Right cardiac atrium (tissue), 5 donors: ENCODE measurements at regions of chrX and their contacts with region 1.

Region 1: GRCh38 chrX:9471571-9471985 is 6.7 kb downstream of the TBL1X start:
- DNase-seq: no peak
- ATAC-seq: no peak
- H3K4me3 ChIP-seq: no peak overlapping the region
- H3K27ac ChIP-seq: no peak overlapping the region
- H3K4me1 ChIP-seq: no peaks in the 10 kb centered on the region
- H3K27me3 ChIP-seq: no peaks in the 10 kb centered on the region

Region 2: DNA sequence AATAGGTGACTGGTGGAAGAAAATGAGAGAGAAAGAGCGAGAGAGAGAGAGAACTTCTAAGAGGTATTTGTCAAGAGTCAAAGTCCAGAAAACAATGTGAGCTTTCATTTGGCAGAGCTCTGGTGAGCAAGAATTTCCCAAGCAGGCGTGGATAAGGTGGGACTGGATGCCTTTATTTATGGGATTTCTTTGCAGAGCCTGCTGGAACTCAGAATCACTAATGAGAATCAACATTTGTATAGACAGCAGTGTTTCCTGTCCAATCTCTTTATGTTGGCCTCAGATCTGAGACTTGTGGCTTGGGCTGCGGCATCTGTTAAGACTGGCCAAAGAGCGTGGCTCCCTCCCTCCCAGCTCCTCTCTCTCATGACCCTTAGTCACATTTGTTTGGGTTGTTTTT is 74.6 kb before region 1 on chrX:
- intact Hi-C with region 1: no loop called
- DNase-seq: no peak
- ATAC-seq: no peak
- H3K4me3 ChIP-seq: no peak overlapping the region
- H3K27ac ChIP-seq: no peak overlapping the region
- H3K4me1 ChIP-seq: peaks cover 1% of the 10 kb centered on the region
- H3K27me3 ChIP-seq: no peaks in the 10 kb centered on the region

Region 3: DNA sequence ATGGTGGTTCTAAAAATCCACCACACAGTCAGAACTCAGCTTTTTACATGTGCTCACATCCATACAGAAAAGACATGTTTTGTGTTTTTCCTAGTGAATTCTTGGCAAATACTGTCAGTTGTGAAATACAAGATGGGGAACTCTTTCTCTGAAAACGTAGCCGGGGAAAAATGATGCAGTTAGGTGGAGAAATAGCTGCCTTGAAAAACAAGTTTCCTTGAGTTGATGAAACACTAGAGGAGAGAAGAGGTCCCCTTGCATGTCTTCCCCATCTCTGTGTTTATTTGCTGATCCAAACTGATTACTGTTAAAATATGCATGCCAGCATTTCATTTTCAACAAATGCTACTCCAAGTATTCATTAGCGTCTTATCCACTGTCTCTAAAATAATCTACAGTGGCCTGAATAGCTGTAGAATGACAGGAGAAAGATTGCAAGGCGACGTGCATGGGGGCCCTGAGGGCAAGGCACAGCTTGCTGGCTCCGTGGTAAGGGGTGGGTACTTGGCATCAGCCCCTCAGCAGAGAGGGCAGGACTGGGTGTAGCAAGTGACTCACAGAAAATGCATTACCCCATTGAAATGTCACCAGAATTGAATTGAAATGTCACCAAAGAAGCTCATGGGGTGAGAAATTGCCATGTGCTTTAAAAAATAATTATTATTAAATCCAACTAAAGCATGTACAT is 54.8 kb before region 1 on chrX:
- intact Hi-C with region 1: no loop called
- DNase-seq: peak; percentile 43 to 64 (median 46)
- ATAC-seq: peak in 1 of 2 donors; percentile 28
- H3K4me3 ChIP-seq: no peak overlapping the region
- H3K27ac ChIP-seq: no peak overlapping the region
- H3K4me1 ChIP-seq: peaks cover 2% of the 10 kb centered on the region
- H3K27me3 ChIP-seq: no peaks in the 10 kb centered on the region

Region 4: DNA sequence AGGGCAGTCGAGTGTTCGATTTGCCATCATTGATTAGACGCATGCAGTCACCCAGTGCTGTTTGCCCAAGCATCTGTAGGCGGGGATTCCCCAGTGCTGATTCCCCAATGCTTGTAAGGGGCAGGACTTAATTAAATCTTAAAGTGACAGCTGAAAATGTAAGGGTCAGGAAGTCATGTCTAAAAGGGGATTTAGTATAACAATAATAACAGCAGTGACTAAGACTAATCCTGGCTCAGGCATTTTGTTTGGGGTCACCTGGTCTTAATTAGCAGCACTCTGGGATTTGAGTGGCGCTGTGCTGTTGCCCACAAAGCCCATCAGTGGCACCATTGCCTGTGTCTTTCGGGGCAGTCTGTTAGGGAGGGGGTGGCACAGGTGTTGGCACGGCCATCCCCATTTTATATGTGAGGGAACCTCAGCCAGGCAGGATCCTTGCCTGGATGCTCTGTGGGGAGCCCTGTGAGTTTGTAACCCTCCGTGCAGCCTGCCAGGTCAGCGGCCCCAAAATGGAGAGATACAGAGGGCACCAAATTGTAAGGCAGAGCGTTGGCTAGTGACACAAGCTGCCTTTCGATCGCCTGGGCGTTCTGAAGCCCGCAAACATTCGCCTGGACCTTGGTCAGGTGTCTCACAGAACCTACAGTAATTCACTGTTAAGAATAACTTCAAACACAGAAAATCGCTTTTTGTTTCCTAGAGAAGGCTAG is 140.0 kb after region 1 on chrX:
- intact Hi-C with region 1: loop called in 1 of 4 experiments (anchors 5 kb)
- DNase-seq: no peak
- ATAC-seq: no peak
- H3K4me3 ChIP-seq: no peak overlapping the region
- H3K27ac ChIP-seq: no peak overlapping the region
- H3K4me1 ChIP-seq: peaks cover 3% of the 10 kb centered on the region
- H3K27me3 ChIP-seq: no peaks in the 10 kb centered on the region